H1 (cell line): ENCODE measurements at regions of chr4 and their contacts with region 1.

Region 1: GRCh38 chr4:56653461-56654237 is 27.4 kb downstream of the HOPX start:
- DNase-seq: no peak
- H3K4me3 ChIP-seq: no peak overlapping the region
- H3K27ac ChIP-seq: no peak overlapping the region
- H3K4me1 ChIP-seq: peaks cover 0 to 13% (median 2%) of the 10 kb centered on the region in 4 experiments; a peak in 4 of 7 replicates
- H3K27me3 ChIP-seq: peaks cover 42 to 55% (median 53%) of the 10 kb centered on the region in 4 experiments
- CTCF ChIP-seq: no peak
- EP300 ChIP-seq: no peak
- POLR2A ChIP-seq: no peak
- RAD21 ChIP-seq: no peak

Region 2: GRCh38 chr4:56372774-56373173 is 280.9 kb before region 1 on chr4:
- CTCF ChIA-PET with region 1: no interaction called
- POLR2A ChIA-PET with region 1: no interaction called
- DNase-seq: no peak
- H3K4me3 ChIP-seq: no peak overlapping the region
- H3K27ac ChIP-seq: no peak overlapping the region
- H3K4me1 ChIP-seq: no peaks in the 10 kb centered on the region
- H3K27me3 ChIP-seq: no peaks in the 10 kb centered on the region
- CTCF ChIP-seq: no peak
- EP300 ChIP-seq: no peak
- POLR2A ChIP-seq: no peak
- RAD21 ChIP-seq: no peak

Region 3: GRCh38 chr4:56630876-56631666 is 22.6 kb before region 1 on chr4:
- CTCF ChIA-PET with region 1: interaction called, 10 read pairs
- POLR2A ChIA-PET with region 1: no interaction called
- DNase-seq: no peak
- H3K4me3 ChIP-seq: no peak overlapping the region
- H3K27ac ChIP-seq: no peak overlapping the region
- H3K4me1 ChIP-seq: no peaks in the 10 kb centered on the region
- H3K27me3 ChIP-seq: no peaks in the 10 kb centered on the region; a peak in 1 of 7 replicates
- CTCF ChIP-seq: no peak
- EP300 ChIP-seq: no peak
- POLR2A ChIP-seq: no peak
- RAD21 ChIP-seq: no peak

Region 4: DNA sequence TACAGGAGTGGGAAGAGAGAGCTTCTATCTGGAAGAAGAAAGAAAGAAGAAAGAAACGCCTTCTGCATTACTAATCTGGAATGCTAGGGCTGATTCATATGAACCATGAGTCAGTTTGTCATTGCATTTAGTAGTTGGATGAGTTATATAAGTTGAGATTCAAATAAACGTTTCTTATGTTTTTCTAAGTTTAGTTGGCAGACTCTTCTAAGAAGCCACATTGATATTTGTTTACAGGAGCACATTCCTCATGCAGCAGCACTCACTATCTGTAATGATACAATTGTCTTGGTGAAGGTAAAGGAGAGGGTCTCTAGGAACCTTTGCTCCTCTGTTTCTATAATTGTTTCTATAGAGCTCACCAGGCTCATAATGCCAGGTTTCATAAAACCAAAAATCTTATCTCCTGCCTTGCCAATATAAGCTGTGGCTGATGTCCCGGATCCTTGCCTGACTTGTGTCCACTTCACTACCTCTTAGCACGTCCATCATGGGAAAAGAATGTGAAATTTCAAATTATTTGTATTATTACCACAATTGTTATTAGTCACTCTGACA is 12.1 kb before region 1 on chr4:
- CTCF ChIA-PET with region 1: interaction called, 34 read pairs
- POLR2A ChIA-PET with region 1: interaction called, 3 read pairs
- DNase-seq: no peak
- H3K4me3 ChIP-seq: no peak overlapping the region
- H3K27ac ChIP-seq: no peak overlapping the region
- H3K4me1 ChIP-seq: no peaks in the 10 kb centered on the region
- H3K27me3 ChIP-seq: no peaks in the 10 kb centered on the region; a peak in 1 of 7 replicates
- CTCF ChIP-seq: no peak
- EP300 ChIP-seq: no peak
- POLR2A ChIP-seq: no peak
- RAD21 ChIP-seq: no peak